AG04449 (cell line): ENCODE measurements at regions of chr17 and their contacts with region 1.

Region 1: GRCh38 chr17:49556223-49556971 is 19.3 kb upstream of the NXPH3 start:
- DNase-seq: no peak
- H3K4me3 ChIP-seq: no peak overlapping the region
- CTCF ChIP-seq: peak; percentile 99

Region 2: DNA sequence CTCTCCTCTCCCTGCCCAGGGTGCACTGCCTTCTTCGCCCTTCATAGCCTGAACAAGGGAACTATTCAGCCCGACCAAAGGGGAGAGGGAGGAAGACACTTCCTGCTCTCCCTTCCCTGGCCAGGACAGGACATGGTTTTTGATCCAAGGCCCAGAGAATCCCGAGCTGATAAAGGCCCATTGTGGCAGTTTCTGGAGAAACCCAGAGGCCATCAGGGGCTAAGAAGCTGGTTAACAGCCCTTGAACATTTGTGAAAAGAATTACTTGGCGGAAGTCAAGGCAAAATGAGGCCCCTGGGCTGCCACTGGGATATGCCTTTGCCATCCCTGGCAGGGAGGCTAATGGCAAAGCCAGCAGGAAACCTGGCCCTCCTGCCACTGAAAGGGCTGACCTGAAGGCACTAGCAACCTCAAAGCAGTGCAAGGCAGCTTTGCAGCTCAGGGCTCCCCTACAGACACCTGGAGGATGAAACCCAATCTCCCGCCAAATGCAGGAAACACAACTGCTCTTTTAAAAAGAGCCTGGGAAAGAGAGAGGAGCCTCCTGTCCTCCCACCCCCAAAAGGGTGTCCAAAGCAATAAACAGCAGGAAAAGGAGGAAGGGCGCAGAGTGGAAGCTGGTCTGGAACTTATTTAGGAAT is 154.3 kb before region 1 on chr17:
- CTCF ChIA-PET with region 1: interaction called, 210 read pairs
- POLR2A ChIA-PET with region 1: no interaction called
- DNase-seq: no peak
- H3K4me3 ChIP-seq: no peak overlapping the region
- CTCF ChIP-seq: no peak

Region 3: DNA sequence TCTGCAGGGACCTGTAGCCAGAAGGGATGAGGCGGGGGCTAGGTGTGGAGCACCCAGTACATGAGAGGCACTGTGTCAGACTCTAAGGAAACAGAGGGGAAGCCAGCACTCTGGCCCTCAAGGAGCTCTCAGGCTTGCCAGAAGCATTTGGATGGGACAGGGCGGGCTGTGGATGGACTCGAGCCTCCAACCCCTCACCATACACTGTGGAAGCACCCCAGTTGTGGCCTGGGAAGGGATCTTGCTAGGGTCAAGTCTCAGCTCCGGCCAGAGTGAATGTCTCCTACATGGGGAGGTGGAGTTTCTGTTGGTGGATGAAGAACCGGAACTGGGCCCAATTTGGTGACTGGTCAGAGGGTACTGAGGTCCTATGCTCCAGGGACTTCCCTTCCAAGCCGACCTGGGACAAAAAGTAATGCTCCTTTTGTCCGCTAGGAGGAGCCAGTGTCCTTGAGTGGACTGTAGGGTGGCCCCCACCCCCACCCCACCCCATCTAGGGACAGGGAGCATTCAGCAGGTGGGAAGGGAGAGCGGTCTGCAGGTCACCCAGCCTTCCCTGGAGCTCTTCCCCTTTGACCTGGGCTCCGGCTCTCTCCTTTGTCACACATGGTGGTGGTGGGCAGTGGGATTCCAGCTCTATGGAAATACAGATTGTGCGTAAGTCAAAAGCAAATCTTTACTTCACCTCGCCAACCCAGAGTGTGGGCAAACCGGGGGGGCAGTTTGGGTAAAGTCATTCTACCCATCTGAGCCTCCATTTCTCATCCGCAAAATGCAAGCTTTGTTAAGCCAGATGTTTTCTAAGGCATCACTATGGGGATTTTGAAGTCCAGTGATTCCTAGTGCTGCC is 121.4 kb before region 1 on chr17:
- CTCF ChIA-PET with region 1: interaction called, 376 read pairs
- POLR2A ChIA-PET with region 1: no interaction called
- DNase-seq: no peak
- H3K4me3 ChIP-seq: no peak overlapping the region
- CTCF ChIP-seq: peak; percentile 70

Region 4: DNA sequence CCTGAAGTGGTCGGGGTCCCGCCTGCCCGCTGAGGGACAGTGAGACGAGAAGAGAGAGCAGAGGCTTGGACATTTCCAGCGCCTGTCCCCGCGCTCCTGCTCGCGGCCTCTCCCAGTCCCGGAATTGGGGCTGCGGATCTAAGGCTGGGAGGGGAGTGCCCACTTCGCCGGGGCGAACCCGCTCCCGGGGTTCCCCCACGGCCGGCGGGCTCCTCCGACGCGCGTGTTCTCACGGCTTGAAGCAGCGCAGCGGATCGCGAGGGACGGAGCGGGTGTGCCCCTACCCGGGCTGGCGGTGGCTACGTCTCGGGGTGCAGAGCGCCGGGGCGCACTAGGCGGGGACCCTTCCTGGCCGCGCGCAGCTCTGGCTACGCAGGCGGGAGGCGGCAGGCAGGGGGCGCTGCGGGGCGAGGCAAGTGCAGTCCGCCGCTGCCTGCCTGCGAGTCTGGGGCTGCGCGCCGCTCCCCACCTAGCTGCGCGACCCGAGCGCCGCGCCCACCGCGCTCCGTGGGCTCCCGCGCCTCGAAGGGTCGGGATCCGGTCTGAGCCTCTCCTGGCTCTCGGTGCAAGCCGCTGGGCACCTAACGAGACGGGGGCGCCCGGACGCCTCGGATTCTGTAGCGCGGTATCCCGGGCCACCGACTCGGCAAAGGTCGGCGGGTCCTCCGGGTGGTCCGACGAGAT is 60.1 kb before region 1 on chr17:
- CTCF ChIA-PET with region 1: interaction called, 44 read pairs
- POLR2A ChIA-PET with region 1: no interaction called
- DNase-seq: no peak
- H3K4me3 ChIP-seq: peak overlapping the region; percentile 33
- CTCF ChIP-seq: peak; percentile 80

Region 5: GRCh38 chr17:49567871-49568694 is 11.7 kb after region 1 on chr17:
- CTCF ChIA-PET with region 1: interaction called, 115 read pairs
- POLR2A ChIA-PET with region 1: no interaction called
- DNase-seq: no peak
- H3K4me3 ChIP-seq: peak overlapping the region; percentile 54
- CTCF ChIP-seq: peak; percentile 96

Region 6: DNA sequence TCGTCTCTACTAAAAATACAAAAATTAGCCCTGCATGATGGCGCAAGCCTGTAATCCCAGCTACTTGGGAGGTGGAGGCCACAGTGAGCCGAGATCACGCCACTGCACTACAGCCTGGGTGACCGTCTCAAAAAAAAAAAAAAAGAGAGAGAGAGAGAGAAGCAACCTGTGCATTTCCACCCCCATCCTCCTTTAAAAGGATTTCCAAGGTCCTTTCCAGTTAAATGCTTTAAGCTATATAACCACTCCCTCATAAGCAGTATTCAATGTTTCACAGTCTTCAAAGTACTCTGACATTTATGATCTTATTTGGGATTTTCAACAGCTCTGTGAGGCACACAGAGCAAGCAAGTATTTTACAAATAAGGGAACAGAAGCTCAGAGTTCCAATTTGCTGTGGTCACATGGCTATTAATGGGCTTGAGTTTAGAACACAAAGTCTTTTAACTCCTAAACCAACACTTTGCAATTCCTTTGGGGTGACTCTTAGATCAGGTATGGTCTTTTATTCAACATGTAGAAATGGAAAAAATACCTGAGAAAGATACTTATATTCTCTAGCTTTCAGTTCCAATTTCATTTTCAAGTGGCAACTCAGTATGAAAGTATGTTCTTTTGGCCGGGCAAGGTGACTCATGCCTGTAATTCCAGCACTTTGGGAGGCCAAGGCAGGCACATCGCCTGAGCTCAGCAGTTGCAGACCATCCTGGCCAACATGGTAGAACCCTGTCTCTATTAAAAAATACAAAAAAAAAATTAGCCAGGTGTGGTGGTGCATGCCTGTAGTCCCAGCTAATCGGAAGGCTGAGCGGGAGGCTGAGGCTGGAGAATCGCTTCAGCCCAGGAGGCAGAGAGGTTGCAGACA is 90.2 kb after region 1 on chr17:
- CTCF ChIA-PET with region 1: no interaction called
- POLR2A ChIA-PET with region 1: no interaction called
- DNase-seq: peak; percentile 26
- H3K4me3 ChIP-seq: peak overlapping the region; percentile 4
- CTCF ChIP-seq: no peak

Region 7: DNA sequence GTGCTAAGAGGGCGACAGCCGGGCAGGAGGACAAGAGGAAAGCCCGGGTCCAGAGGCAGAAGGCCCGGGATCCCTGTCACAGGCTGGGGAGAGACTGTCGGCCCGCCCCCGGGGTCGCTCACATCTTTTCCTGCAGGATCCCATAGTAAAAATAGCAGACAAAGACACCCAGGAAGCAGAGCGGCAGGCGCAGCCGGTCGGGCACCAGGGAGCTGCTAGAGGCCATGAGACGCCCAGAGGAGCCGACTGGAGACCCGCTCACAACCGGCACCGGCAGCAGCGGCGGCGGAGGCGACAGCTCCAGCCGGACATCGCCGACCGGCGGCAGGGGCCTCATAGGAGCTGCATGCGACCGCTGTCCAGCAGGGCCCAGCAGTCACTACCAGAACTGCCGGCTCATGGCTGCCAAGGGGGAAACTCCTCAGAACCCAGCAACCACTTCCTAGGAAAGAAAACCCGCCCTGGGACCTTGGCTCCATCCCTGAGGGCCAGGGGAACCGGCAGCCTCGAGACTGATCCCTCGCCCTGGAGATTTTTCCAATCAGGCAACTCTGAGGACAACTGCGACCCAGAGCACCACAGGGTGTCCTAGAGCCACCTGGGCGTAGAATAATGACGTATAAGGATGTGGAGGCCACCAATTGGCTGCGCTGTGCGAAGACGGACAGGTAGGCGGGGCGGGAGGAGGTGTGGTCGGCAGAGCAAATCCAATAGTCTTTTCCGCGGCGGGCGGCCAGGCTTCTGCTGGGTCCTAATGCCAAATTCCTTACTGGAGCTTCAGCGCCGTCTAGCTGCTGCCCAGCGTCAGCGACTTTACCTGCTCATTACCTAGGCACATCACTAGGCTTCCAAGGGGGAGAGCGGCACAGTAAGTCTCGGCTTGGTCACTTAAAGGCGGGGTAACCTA is 151.5 kb after region 1 on chr17 and contains the start of gene SLC35B1:
- CTCF ChIA-PET with region 1: interaction called, 171 read pairs
- POLR2A ChIA-PET with region 1: no interaction called
- DNase-seq: peak; percentile 93
- H3K4me3 ChIP-seq: peak within 1 kb of the TSS; percentile 91
- CTCF ChIP-seq: peak; percentile 89